ENCODE measurements at regions of chr18 and their contacts with region 1.

Region 1: DNA sequence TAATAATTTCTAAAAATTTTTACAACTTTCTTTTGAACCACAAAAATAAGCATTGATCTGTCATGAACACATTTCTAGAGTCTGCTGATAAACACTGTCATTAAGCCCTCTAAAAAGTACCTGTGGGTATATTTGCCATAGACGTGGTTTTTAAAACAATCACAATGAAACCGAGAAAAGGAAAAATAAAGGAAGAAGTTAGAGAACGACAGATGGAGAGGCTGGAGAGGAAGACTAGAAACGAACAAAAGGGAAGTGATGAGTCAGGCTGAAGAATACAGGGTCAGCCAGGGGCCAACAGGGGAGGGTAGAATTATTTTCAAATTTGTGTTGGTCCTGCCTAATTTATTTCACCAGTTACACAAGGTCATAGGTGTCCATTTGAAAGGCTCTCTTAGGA is 62.0 kb downstream of the MYL12B start:
- DNase-seq: no peak
- ATAC-seq: no peak
- H3K4me3 ChIP-seq: no peak overlapping the region
- H3K4me3 Mint-ChIP-seq: no peak overlapping the region
- H3K27ac ChIP-seq: no peak overlapping the region
- H3K27ac Mint-ChIP-seq: no peak overlapping the region
- H3K4me1 ChIP-seq: no peaks in the 10 kb centered on the region
- H3K4me1 Mint-ChIP-seq: no peaks in the 10 kb centered on the region
- H3K27me3 ChIP-seq: no peaks in the 10 kb centered on the region
- H3K27me3 Mint-ChIP-seq: peaks cover 13% of the 10 kb centered on the region
- CTCF ChIP-seq: no peak

Region 2: DNA sequence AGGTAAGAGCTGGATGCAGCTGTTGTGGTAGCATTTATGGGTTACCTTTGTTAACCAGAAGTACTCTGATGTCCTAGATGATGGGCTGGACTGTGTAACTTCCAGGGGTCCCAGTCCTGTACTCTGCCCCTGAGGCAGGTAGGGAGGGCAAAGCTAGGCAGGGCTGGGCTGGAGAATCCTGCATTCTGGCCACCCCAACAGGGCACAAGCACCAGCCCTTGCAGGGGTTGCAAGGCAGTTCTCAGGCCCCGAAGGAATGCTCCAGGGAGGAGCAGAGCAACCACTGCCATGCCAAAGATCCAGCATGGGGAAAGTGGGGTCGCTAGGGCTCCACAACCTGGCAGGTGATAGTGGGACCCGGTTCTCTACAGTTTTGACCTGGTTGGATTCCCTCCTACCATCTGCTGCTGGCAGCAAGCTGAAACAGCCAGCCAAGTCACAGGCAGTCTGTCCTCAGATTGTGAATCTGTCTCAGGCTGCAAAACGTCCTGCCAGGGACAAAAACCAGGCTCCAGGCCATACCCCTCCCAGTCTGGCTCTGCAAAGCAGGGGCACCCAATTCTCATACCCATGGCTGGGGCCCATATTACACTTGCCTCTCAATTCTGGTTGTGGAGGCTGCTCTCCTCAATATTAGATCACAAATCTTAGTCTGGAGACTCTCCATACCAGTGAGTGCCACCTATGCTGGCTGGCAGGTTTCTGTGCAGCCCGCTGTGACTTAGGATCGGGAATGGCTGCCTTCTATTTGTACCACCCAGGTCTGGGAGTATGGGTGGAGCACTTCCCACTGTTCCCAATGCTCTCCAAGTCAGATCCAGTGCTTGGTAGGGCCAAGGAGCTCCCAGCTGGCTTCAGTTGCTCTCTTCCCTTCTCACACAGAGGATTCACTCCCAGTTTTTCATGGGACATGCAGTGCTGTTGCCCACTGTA is 607.2 kb before region 1 on chr18:
- CTCF ChIA-PET with region 1: no interaction called
- POLR2A ChIA-PET with region 1: no interaction called
- intact Hi-C with region 1: no loop called
- DNase-seq: no peak
- ATAC-seq: no peak
- H3K4me3 ChIP-seq: no peak overlapping the region
- H3K4me3 Mint-ChIP-seq: no peak overlapping the region
- H3K27ac ChIP-seq: peak overlapping the region in 1 of 2 experiments; percentile 22
- H3K27ac Mint-ChIP-seq: no peak overlapping the region
- H3K4me1 ChIP-seq: peaks cover 13% of the 10 kb centered on the region
- H3K4me1 Mint-ChIP-seq: peaks cover 56% of the 10 kb centered on the region
- H3K27me3 ChIP-seq: no peaks in the 10 kb centered on the region
- H3K27me3 Mint-ChIP-seq: no peaks in the 10 kb centered on the region
- CTCF ChIP-seq: no peak

Region 3: DNA sequence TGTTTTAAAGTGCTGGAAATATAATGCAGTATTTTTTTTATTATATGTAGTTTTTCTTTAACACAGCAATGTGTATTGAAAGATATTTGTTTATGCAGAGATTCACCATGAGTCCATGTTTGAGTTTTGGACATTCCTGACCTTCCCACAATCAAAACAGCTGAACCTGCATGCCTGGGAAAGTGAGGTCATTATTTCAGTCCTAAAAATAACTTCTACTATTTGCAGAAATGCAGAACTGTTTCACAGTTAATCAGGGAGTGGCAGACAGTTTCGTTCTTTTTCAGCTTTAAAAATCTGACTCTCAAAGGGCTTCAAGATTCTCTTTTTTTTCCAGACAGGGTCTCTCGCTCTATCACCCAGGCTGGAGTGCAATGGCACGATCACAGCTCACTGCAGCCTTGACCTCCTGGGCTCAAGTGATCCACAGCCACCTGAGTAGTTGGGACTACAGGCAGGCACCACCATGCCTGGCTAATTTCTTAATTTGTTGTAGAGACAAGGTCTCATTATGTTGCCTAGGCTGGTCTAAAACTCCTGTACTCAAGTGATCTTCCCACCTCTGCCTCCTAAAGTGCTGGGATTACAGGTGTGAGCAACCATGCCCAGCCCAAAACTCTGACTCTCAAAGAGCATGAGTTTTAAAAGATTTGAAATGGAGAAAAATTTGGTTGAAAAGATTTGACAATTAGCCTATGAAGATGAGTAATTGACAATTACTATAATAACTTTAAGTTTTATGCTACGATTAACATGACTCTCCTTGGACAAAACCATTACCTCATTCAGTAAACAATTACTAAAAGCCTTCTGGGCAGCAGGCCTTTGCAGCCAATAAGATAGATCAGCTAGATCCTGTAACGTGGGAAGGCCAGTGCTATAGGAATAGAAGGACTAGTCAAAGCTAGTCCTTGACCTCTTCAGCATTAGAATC is 66.9 kb before region 1 on chr18:
- CTCF ChIA-PET with region 1: no interaction called
- POLR2A ChIA-PET with region 1: no interaction called
- intact Hi-C with region 1: no loop called
- DNase-seq: no peak
- ATAC-seq: no peak
- H3K4me3 ChIP-seq: no peak overlapping the region
- H3K4me3 Mint-ChIP-seq: no peak overlapping the region
- H3K27ac ChIP-seq: no peak overlapping the region
- H3K27ac Mint-ChIP-seq: peak overlapping the region; percentile 50
- H3K4me1 ChIP-seq: peaks cover 61% of the 10 kb centered on the region
- H3K4me1 Mint-ChIP-seq: peaks cover 85% of the 10 kb centered on the region
- H3K27me3 ChIP-seq: no peaks in the 10 kb centered on the region
- H3K27me3 Mint-ChIP-seq: no peaks in the 10 kb centered on the region
- CTCF ChIP-seq: no peak

Region 4: GRCh38 chr18:3297025-3297984 is 26.6 kb before region 1 on chr18:
- CTCF ChIA-PET with region 1: interaction called, 12 read pairs
- POLR2A ChIA-PET with region 1: no interaction called
- intact Hi-C with region 1: no loop called
- DNase-seq: peak; percentile 86 to 95 (median 93)
- ATAC-seq: peak; percentile 98
- H3K4me3 ChIP-seq: peak overlapping the region; percentile 71 to 87
- H3K4me3 Mint-ChIP-seq: peak overlapping the region; percentile 92
- H3K27ac ChIP-seq: peak overlapping the region; percentile 51 to 58
- H3K27ac Mint-ChIP-seq: peak overlapping the region; percentile 86
- H3K4me1 ChIP-seq: peaks cover 7% of the 10 kb centered on the region
- H3K4me1 Mint-ChIP-seq: peaks cover 8% of the 10 kb centered on the region
- H3K27me3 ChIP-seq: peaks cover 0 to 2% of the 10 kb centered on the region in 2 experiments
- H3K27me3 Mint-ChIP-seq: peaks cover 27% of the 10 kb centered on the region
- CTCF ChIP-seq: peak; percentile 79

Region 5: GRCh38 chr18:3952031-3952430 is 628.1 kb after region 1 on chr18:
- CTCF ChIA-PET with region 1: no interaction called
- POLR2A ChIA-PET with region 1: no interaction called
- intact Hi-C with region 1: no loop called
- DNase-seq: no peak
- ATAC-seq: no peak
- H3K4me3 ChIP-seq: no peak overlapping the region
- H3K4me3 Mint-ChIP-seq: no peak overlapping the region
- H3K27ac ChIP-seq: no peak overlapping the region
- H3K27ac Mint-ChIP-seq: no peak overlapping the region
- H3K4me1 ChIP-seq: no peaks in the 10 kb centered on the region
- H3K4me1 Mint-ChIP-seq: no peaks in the 10 kb centered on the region
- H3K27me3 ChIP-seq: no peaks in the 10 kb centered on the region
- H3K27me3 Mint-ChIP-seq: peaks cover 2% of the 10 kb centered on the region
- CTCF ChIP-seq: no peak

Measured in CD8-positive, alpha-beta T cell (primary cell).